Uterus (tissue), 4 donors: ENCODE measurements at regions of chr18 and their contacts with region 1.

Region 1: DNA sequence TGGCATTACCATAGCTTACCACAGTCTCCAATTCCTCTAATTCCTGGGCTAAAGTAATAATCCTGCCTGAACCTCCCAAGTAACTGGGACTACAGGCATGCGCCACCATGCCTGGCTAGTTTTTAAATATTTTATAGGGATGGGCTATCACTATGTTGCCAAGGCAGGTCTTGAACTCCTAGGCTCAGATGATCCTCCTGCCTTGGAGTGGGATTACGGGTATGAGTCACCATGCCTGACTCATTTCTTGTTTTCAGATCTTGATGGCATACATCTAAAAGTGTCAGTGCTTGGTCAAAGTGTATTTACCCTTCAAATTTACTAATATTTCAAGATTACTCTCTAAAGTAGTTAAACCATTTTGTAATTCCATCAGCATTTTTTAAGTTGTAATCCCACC is 9.4 kb upstream of the SOCS6 start:
- DNase-seq: no peak
- H3K4me3 ChIP-seq: no peak overlapping the region
- H3K27ac ChIP-seq: no peak overlapping the region
- H3K4me1 ChIP-seq: no peaks in the 10 kb centered on the region
- H3K27me3 ChIP-seq: no peaks in the 10 kb centered on the region
- CTCF ChIP-seq: no peak
- POLR2A ChIP-seq: no peak

Region 2: DNA sequence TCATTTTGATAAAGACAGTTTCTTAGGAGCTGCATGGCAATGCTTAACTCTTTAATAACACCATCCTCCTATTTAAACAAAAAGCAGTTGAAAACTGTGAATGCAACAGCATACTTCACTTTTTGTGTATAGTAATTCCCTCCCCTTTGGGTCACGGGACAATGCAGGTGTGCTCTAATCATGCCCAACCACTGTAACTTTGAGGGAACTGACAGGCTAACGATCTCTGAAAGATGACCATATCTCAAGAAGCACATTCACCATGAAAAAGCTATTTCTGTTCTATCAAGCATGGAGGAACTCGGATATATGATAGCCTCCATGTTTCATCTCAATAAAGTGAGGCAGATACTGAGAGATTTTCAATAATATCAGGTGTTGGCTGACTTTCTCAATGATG is 250.7 kb before region 1 on chr18:
- intact Hi-C with region 1: no loop called
- DNase-seq: no peak
- H3K4me3 ChIP-seq: no peak overlapping the region
- H3K27ac ChIP-seq: no peak overlapping the region
- H3K4me1 ChIP-seq: no peaks in the 10 kb centered on the region
- H3K27me3 ChIP-seq: no peaks in the 10 kb centered on the region
- CTCF ChIP-seq: no peak
- POLR2A ChIP-seq: no peak

Region 3: GRCh38 chr18:70221156-70221914 is 58.1 kb before region 1 on chr18:
- intact Hi-C with region 1: loop called (anchors 10 kb)
- DNase-seq: peak in 1 of 2 donors; percentile 17
- H3K4me3 ChIP-seq: no peak overlapping the region
- H3K27ac ChIP-seq: no peak overlapping the region
- H3K4me1 ChIP-seq: no peaks in the 10 kb centered on the region
- H3K27me3 ChIP-seq: no peaks in the 10 kb centered on the region
- CTCF ChIP-seq: no peak
- POLR2A ChIP-seq: no peak

Region 4: DNA sequence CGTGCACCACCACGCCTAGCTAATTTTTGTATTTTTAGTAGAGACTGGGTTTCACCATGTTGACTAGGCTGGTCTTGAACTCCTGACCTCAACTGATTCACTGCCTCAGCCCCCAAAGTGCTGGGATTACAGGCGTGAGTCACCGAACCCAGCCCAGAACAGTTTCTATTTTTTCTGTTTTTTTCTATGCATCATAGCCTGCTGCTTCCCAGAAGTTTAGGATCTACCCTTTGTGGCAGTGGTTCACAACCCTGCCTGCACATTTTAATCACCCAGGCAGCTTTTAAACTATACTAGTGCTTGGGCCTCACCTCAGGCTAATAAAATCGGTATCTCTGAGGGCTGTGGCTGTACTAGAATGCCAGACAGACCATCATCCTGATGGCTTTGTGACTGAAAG is 30.4 kb before region 1 on chr18:
- intact Hi-C with region 1: no loop called
- DNase-seq: no peak
- H3K4me3 ChIP-seq: no peak overlapping the region
- H3K27ac ChIP-seq: no peak overlapping the region
- H3K4me1 ChIP-seq: no peaks in the 10 kb centered on the region
- H3K27me3 ChIP-seq: no peaks in the 10 kb centered on the region
- CTCF ChIP-seq: no peak
- POLR2A ChIP-seq: no peak

Region 5: DNA sequence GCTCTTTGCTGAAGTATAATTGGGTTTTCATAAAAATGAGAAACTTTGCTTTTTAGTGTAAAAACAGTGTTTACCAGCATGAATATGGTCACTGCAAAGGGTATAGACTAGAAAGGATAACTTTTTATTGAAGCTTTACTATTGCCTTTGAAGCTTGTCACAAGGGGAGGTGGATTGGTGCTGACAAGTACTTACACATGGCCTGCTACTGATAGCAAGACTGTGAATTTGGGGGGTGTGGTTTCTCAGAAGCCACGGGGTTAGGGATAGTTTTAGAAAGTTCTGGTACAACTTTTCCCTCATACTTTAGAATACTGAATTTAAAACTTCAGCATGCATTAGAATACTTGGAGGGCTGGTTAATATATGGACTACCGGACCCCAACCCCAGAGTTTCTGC is 303.5 kb after region 1 on chr18:
- intact Hi-C with region 1: no loop called
- DNase-seq: no peak
- H3K4me3 ChIP-seq: no peak overlapping the region
- H3K27ac ChIP-seq: no peak overlapping the region
- H3K4me1 ChIP-seq: no peaks in the 10 kb centered on the region
- H3K27me3 ChIP-seq: no peaks in the 10 kb centered on the region
- CTCF ChIP-seq: no peak
- POLR2A ChIP-seq: no peak